Activated naive CD4-positive, alpha-beta T cell treated with anti-CD3 and anti-CD28 coated beads for 36 hours (primary cell): ENCODE measurements at regions of chr10 and their contacts with region 1.

Region 1: DNA sequence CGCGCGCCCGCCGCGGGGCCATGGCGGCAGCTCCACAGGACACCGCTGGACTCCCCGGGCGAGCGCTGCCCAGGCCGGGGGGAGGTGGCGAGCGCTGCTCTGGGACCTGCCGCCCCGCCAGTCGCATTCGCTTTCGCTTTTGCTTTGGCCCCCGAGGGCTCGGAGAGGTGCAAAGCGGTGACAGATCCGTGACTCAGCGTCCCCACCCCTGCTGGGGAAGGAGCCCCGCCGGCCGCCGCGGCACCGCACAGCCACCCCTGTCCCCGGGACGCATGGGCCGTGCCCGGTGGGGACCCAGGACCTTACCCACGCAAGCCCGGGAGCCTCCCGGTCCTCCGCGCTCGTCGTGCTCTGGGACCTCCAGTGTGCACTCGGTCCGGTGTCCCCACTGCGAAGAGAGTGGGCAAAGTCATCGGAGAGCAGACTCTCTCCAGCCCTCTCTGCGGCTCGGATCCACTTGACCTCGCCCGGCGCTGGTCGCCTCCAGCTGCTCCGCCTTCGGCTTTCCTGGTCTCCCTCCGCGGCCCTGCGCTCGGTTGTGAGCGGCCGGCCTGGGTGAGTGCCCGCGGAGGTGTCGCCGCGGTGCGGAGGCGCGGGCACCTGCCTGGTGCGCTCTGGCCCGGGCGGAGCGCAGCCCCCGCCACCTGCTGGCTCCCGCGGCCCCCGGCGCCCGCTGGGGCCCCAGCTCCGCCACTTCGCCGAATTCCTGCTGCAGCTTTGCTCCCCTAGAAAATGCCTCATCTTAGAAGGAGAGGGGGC is at the start of gene IL15RA:
- DNase-seq: peak; percentile 91
- H3K4me3 Mint-ChIP-seq: peak within 1 kb of the TSS; percentile 97
- H3K27ac Mint-ChIP-seq: peak within 1 kb of the TSS; percentile 97
- H3K4me1 Mint-ChIP-seq: peaks cover 24% of the 10 kb centered on the region
- H3K27me3 Mint-ChIP-seq: no peaks in the 10 kb centered on the region
- total RNA-seq, gene IL15RA: 14.7 to 16.3 TPM

Region 2: DNA sequence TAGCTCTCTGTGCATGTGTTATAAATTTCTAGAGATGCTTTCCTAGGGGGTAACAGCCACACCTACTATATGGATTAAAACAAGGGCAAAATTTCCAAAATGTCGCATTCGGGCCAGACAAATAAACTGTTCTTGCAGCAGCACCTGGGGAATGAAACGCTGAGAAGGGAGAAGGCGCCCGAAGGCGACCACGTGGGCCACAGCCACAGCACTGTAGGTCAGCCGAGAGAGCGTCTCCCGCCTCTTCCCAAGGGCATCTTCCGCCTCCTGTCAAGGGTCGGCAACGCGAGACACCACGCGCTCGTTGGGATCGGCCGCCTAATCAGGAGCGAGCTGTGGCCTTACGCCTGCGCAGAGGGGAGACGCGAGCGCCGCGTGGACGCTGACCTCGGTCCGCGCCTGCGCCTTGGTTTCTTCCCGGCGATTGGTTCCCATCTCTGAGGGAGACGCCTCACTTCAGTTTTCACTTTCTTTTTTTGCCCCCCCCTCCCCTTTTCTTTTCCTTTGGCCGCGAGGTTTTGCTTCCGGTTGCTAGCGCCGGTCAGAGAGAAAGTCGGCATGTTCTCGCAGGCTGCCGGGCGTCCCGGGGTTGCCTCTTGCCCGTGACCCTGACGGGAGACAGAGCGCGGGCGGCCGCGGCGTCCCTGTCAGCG is 293.2 kb before region 1 on chr10 and contains the start of gene TASOR2:
- CTCF ChIA-PET with region 1: no interaction called
- intact Hi-C with region 1: loop called (anchors 2 kb)
- DNase-seq: peak; percentile 98
- H3K4me3 Mint-ChIP-seq: peak within 1 kb of the TSS; percentile 87
- H3K27ac Mint-ChIP-seq: peak within 1 kb of the TSS; percentile 94
- H3K4me1 Mint-ChIP-seq: peaks cover 45% of the 10 kb centered on the region
- H3K27me3 Mint-ChIP-seq: no peaks in the 10 kb centered on the region
- total RNA-seq, gene TASOR2: 36.4 to 37.7 TPM

Region 3: GRCh38 chr10:5882961-5883360 is 94.7 kb before region 1 on chr10:
- CTCF ChIA-PET with region 1: no interaction called
- intact Hi-C with region 1: no loop called
- DNase-seq: no peak
- H3K4me3 Mint-ChIP-seq: no peak overlapping the region
- H3K27ac Mint-ChIP-seq: no peak overlapping the region
- H3K4me1 Mint-ChIP-seq: peaks cover 10% of the 10 kb centered on the region
- H3K27me3 Mint-ChIP-seq: no peaks in the 10 kb centered on the region

Region 4: GRCh38 chr10:5943536-5943935 is 34.1 kb before region 1 on chr10:
- CTCF ChIA-PET with region 1: no interaction called
- intact Hi-C with region 1: no loop called
- DNase-seq: no peak
- H3K4me3 Mint-ChIP-seq: no peak overlapping the region
- H3K27ac Mint-ChIP-seq: no peak overlapping the region
- H3K4me1 Mint-ChIP-seq: peaks cover 10% of the 10 kb centered on the region
- H3K27me3 Mint-ChIP-seq: no peaks in the 10 kb centered on the region

Region 5: GRCh38 chr10:6014241-6014761 is 36.7 kb after region 1 on chr10:
- CTCF ChIA-PET with region 1: interaction called, 13 read pairs
- intact Hi-C with region 1: loop called (anchors 1 kb)
- DNase-seq: peak; percentile 83
- H3K4me3 Mint-ChIP-seq: no peak overlapping the region
- H3K27ac Mint-ChIP-seq: peak overlapping the region; percentile 91
- H3K4me1 Mint-ChIP-seq: peaks cover 61% of the 10 kb centered on the region
- H3K27me3 Mint-ChIP-seq: no peaks in the 10 kb centered on the region

Region 6: DNA sequence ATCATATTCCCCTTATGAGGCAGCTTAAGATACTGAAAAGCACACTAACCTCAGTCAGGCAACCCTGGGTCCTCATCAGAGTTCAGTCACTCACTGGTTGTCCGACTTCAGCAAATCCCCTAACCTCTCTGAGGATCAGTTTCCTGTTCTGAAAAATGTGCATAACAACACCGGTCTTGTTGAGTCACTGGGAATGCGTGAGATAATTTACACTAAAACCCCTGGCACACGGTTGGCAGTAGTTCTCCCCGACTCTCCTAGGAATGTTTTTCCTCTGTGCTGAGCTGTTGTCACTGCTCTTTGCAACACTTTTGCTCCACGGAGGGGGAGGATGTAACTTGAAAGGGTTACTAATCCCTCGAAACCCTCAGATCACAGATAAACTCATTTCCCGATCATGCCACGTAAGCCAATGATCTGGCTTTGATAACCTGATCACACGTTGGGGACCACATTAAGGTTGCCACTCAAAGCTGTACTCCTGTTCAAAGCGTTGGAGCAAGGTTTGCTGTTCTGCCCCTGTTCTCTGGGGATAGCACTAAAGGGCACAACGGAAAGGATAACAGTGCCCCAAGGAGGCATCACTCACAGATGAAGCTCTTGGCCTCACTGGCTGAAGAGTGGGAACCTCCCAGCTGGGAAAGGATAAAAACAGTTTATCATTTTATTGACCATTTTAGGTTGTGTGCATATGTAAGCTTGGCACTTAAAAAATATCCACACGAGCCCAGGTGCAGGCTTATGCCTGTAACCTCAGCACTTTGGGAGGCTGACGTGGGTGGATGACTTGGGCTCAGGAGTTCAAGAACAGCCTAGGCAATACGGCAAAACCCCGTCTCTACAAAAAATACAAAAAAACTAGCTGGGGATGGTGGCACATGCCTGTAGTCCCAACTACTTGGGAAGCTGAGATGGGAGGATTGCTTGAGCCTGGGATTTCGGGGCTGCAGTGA is 106.1 kb after region 1 on chr10:
- CTCF ChIA-PET with region 1: interaction called, 12 read pairs
- intact Hi-C with region 1: loop called (anchors 1 kb)
- DNase-seq: peak; percentile 92
- H3K4me3 Mint-ChIP-seq: peak overlapping the region; percentile 67
- H3K27ac Mint-ChIP-seq: peak overlapping the region; percentile 90
- H3K4me1 Mint-ChIP-seq: peaks cover 61% of the 10 kb centered on the region
- H3K27me3 Mint-ChIP-seq: no peaks in the 10 kb centered on the region

Region 7: DNA sequence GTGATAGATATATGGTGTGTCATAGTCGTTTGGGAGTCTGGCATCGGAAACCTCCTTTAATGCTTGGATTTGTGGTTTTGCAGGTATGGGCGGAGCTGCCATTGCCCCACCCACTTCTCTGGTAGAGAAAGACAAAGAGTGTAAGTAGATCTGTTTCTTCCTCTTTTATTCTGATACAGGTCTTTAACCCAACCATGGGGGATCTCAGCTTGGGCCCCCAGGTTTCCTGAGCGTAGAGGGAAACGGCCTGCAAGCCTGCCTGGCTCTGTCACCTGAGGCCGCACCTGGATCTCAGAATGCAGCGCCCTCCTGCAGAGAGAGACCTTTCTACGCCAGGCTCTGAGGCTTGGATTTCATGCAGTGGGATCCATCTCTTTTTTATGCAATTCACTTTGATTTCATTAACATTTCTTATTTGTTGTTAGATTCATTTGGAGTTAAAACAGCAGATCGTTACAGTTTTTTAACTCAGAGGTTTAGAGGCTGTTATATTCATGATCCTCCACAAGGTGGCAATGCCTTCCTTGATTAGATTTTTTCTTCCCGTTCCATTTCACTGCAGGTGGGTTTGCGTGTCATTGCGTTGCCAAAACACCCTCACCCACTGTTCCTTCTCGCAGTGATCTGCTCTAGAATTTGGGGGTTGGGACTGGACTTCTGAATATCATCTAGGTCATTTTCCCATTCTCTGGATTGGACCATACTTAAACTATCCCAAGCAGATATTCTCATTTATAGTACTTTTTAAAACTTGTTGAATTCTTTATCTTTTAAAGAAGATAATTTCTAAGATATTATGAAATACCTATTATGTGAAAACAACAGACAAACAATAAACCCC is 131.2 kb after region 1 on chr10:
- CTCF ChIA-PET with region 1: no interaction called
- intact Hi-C with region 1: no loop called
- DNase-seq: peak; percentile 36
- H3K4me3 Mint-ChIP-seq: no peak overlapping the region
- H3K27ac Mint-ChIP-seq: peak overlapping the region; percentile 66
- H3K4me1 Mint-ChIP-seq: peaks cover 21% of the 10 kb centered on the region
- H3K27me3 Mint-ChIP-seq: no peaks in the 10 kb centered on the region

Region 8: GRCh38 chr10:6163364-6164270 is 186.0 kb after region 1 on chr10:
- CTCF ChIA-PET with region 1: no interaction called
- intact Hi-C with region 1: loop called (anchors 5 kb)
- DNase-seq: peak; percentile 92
- H3K4me3 Mint-ChIP-seq: peak overlapping the region; percentile 98
- H3K27ac Mint-ChIP-seq: peak overlapping the region; percentile 94
- H3K4me1 Mint-ChIP-seq: peaks cover 57% of the 10 kb centered on the region
- H3K27me3 Mint-ChIP-seq: no peaks in the 10 kb centered on the region